ENCODE measurements at regions of chr3 and their contacts with region 1.

Region 1: GRCh38 chr3:134794950-134795745 is at the start of gene EPHB1:
- DNase-seq: peak; percentile 87
- H3K4me3 ChIP-seq: peak within 1 kb of the TSS; percentile 52 to 83
- H3K27ac ChIP-seq: no peak within 1 kb of the TSS
- H3K4me1 ChIP-seq: peaks cover 0 to 8% of the 10 kb centered on the region in 2 experiments; a peak in 1 of 4 replicates
- H3K27me3 ChIP-seq: no peaks in the 10 kb centered on the region; the same call in 1 of the 2 replicates
- CTCF ChIP-seq: peak; percentile 96
- EP300 ChIP-seq: no peak
- RAD21 ChIP-seq: peak; percentile 89
- polyA plus RNA-seq, gene EPHB1: 0.84 and 1.2 TPM in 2 replicates

Region 2: GRCh38 chr3:133691410-133692107 is 1103.6 kb before region 1 on chr3:
- CTCF ChIA-PET with region 1: no interaction called
- POLR2A ChIA-PET with region 1: no interaction called
- DNase-seq: no peak
- H3K4me3 ChIP-seq: no peak overlapping the region
- H3K27ac ChIP-seq: no peak overlapping the region
- H3K4me1 ChIP-seq: no peaks in the 10 kb centered on the region
- H3K27me3 ChIP-seq: no peaks in the 10 kb centered on the region
- CTCF ChIP-seq: no peak
- EP300 ChIP-seq: no peak
- RAD21 ChIP-seq: no peak

Region 3: DNA sequence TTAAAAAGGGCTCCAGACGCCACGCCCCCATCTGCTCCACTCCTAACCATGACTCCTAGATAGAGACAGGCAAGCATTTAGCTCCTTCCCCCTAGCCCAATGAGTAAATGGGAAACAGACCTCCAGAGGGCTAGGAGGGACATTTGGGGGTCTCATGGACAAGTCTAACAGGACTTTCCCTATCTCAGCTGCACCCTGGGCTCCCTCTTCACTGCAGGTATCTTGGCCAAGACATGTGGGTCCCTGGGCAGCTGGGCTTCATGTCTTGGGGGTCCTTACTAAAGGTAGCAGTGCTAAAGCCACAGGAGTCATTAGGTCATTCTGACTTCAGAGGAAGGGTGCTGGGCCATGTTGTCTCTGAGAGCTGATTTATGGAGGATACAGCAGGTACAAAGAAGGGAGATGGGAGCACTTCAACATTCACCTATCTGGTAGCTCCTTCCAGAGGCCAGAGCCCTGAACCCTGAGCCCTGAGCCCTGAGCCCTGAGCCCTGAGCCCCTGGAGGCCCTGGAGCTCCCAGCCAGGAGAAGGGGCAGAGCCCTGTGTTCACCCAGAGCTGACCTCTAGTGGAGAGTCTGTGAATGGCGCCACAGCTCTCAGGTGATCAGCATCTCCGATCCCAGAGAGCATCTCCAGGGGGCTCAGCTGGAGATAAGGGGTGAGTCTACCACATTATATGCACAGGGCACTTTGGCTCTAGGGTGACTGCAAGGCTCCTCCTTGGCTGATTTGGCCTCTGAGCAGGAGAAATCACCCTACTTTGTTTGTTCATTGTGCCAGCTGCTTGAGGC is 40.2 kb before region 1 on chr3:
- CTCF ChIA-PET with region 1: interaction called, 10 read pairs
- POLR2A ChIA-PET with region 1: no interaction called
- DNase-seq: peak; percentile 48
- H3K4me3 ChIP-seq: no peak overlapping the region
- H3K27ac ChIP-seq: no peak overlapping the region
- H3K4me1 ChIP-seq: peaks cover 0 to 15% of the 10 kb centered on the region in 2 experiments; a peak in 2 of 4 replicates
- H3K27me3 ChIP-seq: no peaks in the 10 kb centered on the region
- CTCF ChIP-seq: peak; percentile 72
- EP300 ChIP-seq: no peak
- RAD21 ChIP-seq: peak; percentile 56

Region 4: GRCh38 chr3:134777341-134777740 is 17.8 kb before region 1 on chr3:
- CTCF ChIA-PET with region 1: interaction called, 13 read pairs
- POLR2A ChIA-PET with region 1: no interaction called
- DNase-seq: no peak
- H3K4me3 ChIP-seq: no peak overlapping the region
- H3K27ac ChIP-seq: no peak overlapping the region
- H3K4me1 ChIP-seq: no peaks in the 10 kb centered on the region
- H3K27me3 ChIP-seq: no peaks in the 10 kb centered on the region
- CTCF ChIP-seq: no peak
- EP300 ChIP-seq: no peak
- RAD21 ChIP-seq: no peak

Region 5: DNA sequence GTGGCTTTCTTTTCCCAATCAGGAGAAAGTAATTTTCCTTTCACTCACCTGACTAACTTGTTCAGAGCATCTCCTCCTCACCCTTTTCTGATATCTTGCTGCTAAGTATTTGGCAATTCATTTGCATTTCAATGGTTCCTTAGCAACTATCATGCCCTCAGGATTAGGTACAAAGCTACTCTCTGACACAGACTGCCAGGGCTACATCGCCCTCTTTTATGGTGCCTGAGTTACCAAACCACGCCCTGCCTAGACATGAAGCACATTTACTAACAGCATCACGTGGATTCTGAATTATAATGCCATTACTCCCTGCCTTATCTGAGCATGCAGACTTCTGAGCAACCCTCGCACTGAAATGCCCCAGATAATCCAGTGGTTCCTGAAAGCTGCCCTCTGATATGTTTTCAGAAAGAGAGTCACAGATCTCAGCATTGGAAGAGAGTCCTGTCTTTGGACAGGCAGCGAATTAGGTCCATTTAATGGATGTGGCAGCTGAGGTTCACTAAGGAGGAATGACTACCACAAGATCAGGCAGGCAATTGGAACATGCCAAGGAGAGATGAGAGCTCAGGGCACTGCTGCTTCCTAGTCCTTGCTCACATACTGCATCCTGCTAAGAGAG is 14.4 kb after region 1 on chr3:
- CTCF ChIA-PET with region 1: interaction called, 15 read pairs
- POLR2A ChIA-PET with region 1: no interaction called
- DNase-seq: no peak
- H3K4me3 ChIP-seq: no peak overlapping the region
- H3K27ac ChIP-seq: no peak overlapping the region
- H3K4me1 ChIP-seq: no peaks in the 10 kb centered on the region
- H3K27me3 ChIP-seq: no peaks in the 10 kb centered on the region
- CTCF ChIP-seq: no peak
- EP300 ChIP-seq: no peak
- RAD21 ChIP-seq: no peak

Region 6: GRCh38 chr3:135240426-135240825 is 445.3 kb after region 1 on chr3:
- CTCF ChIA-PET with region 1: interaction called, 12 read pairs
- POLR2A ChIA-PET with region 1: interaction called, 4 read pairs
- DNase-seq: no peak
- H3K4me3 ChIP-seq: no peak overlapping the region
- H3K27ac ChIP-seq: no peak overlapping the region
- H3K4me1 ChIP-seq: peaks cover 0 to 25% of the 10 kb centered on the region in 2 experiments; a peak in 2 of 4 replicates
- H3K27me3 ChIP-seq: no peaks in the 10 kb centered on the region
- CTCF ChIP-seq: no peak
- EP300 ChIP-seq: no peak
- RAD21 ChIP-seq: peak; percentile 38; the same call in 1 of the 2 replicates

Region 7: DNA sequence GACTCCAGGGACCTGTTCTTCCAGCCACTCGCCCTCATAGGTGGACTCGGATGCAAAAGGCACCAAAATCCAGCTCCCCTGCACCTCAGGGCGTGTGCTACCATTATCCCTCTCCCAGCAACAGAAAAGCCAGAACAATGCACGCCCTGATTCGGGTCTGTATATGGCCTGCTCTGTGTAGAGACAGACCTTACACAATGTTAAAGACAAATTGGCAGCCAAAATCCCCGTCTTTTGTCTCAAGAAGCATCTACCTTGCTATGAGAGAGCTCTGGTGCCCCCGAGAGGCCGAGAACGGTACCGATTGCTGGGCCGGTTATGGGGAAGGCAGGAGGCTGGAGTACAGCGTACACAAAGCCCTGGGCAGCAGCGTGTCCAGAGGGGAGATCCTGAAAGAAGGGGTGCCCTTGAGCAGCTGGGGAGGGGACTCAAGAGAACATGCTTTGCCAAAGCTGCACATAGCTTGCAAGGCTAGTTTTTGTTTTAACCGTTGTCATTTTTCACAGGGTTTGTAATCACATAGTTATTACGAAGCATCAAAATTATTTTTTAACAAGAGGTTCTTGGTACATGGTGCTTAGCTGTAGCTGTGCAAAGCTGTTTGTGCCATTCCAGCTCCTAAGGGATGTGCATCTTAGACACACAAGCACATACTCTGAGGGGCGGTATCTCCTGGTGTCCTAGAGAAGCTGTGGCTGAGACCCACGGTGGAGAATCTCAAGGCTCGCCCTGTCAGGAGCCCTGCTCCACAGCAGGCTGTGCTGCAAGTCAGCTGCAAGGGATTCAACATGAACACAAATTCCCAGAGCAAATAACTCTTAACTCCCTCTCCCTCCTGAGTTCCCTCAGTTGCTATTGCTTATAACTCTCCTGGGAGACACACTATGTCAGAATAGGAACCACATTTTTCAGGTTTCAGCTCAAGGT is 708.9 kb after region 1 on chr3:
- CTCF ChIA-PET with region 1: interaction called, 103 read pairs
- POLR2A ChIA-PET with region 1: no interaction called
- DNase-seq: peak; percentile 68
- H3K4me3 ChIP-seq: no peak overlapping the region; a peak in 1 of 4 replicates
- H3K27ac ChIP-seq: no peak overlapping the region
- H3K4me1 ChIP-seq: no peaks in the 10 kb centered on the region
- H3K27me3 ChIP-seq: no peaks in the 10 kb centered on the region
- CTCF ChIP-seq: peak; percentile 72
- EP300 ChIP-seq: no peak
- RAD21 ChIP-seq: peak; percentile 83

Region 8: GRCh38 chr3:135895106-135895733 is 1100.1 kb after region 1 on chr3:
- CTCF ChIA-PET with region 1: interaction called, 29 read pairs
- POLR2A ChIA-PET with region 1: no interaction called
- DNase-seq: peak; percentile 57
- H3K4me3 ChIP-seq: no peak overlapping the region; a peak in 1 of 4 replicates
- H3K27ac ChIP-seq: no peak overlapping the region
- H3K4me1 ChIP-seq: no peaks in the 10 kb centered on the region
- H3K27me3 ChIP-seq: no peaks in the 10 kb centered on the region
- CTCF ChIP-seq: peak; percentile 96
- EP300 ChIP-seq: no peak
- RAD21 ChIP-seq: peak; percentile 94

Measured in SK-N-SH (cell line).